Activated T-helper 2 cell treated with anti-CD3 and anti-CD28 coated beads, Interferon-gamma antibody, Interleukin-2, Interleukin-4, amounts not matched to agents 10 μg/mL and 5 μg/mL and 100 μg/mL, durations not matched to agents 14 hours and 24 hours and 36 hours (primary cell): ENCODE measurements at regions of chr2 and their contacts with region 1.

Region 1: GRCh38 chr2:70340921-70341765 is 39.3 kb upstream of the FAM136A start:
- DNase-seq: peak; percentile 13
- H3K4me3 Mint-ChIP-seq: no peak overlapping the region
- H3K27ac Mint-ChIP-seq: no peak overlapping the region
- H3K4me1 Mint-ChIP-seq: no peaks in the 10 kb centered on the region
- H3K27me3 Mint-ChIP-seq: peaks cover 15% of the 10 kb centered on the region

Region 2: GRCh38 chr2:70616168-70616694 is 275.1 kb after region 1 on chr2:
- intact Hi-C with region 1: loop called (anchors 5 kb)
- DNase-seq: no peak
- H3K4me3 Mint-ChIP-seq: no peak overlapping the region
- H3K27ac Mint-ChIP-seq: no peak overlapping the region
- H3K4me1 Mint-ChIP-seq: peaks cover 2% of the 10 kb centered on the region
- H3K27me3 Mint-ChIP-seq: peaks cover 14% of the 10 kb centered on the region

Region 3: GRCh38 chr2:70647873-70648481 is 306.8 kb after region 1 on chr2:
- intact Hi-C with region 1: loop called (anchors 1 kb)
- DNase-seq: peak; percentile 55
- H3K4me3 Mint-ChIP-seq: no peak overlapping the region
- H3K27ac Mint-ChIP-seq: no peak overlapping the region
- H3K4me1 Mint-ChIP-seq: no peaks in the 10 kb centered on the region
- H3K27me3 Mint-ChIP-seq: peaks cover 22% of the 10 kb centered on the region